Activated CD8-positive, alpha-beta memory T cell treated with anti-CD3 and anti-CD28 coated beads, Interleukin-2, amount 10 ng/mL, durations not matched to agents 7 days and 5 days (primary cell): ENCODE measurements at regions of chr19 and their contacts with region 1.

Region 1: GRCh38 chr19:42028304-42029216 is 34.5 kb upstream of the ATP1A3 start:
- DNase-seq: peak; percentile 46
- ATAC-seq: no peak
- H3K4me3 Mint-ChIP-seq: no peak overlapping the region
- H3K27ac Mint-ChIP-seq: no peak overlapping the region
- H3K4me1 Mint-ChIP-seq: no peaks in the 10 kb centered on the region
- H3K27me3 Mint-ChIP-seq: peaks cover 16% of the 10 kb centered on the region

Region 2: DNA sequence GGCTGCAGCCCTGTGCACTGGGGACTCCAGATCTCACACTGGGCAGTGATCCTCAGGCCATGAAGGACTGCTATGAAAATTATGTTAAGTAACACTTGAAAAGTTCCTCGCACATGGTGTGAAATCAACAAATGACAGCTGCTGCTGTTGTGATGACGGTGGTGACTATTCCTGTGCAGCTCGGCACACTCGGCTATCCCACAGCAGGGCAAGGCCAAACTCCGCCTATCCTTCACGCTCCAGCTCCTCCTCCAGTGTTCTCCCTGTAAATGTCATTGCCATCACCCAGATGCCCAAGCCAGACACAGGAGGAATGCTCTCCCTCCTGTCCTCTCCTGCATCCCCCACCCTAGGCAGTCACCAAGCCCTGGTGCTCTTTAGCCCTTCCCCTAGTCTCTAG is 10.1 kb after region 1 on chr19:
- CTCF ChIA-PET with region 1: interaction called, 12 read pairs
- DNase-seq: no peak
- ATAC-seq: no peak
- H3K4me3 Mint-ChIP-seq: no peak overlapping the region
- H3K27ac Mint-ChIP-seq: no peak overlapping the region
- H3K4me1 Mint-ChIP-seq: peaks cover 5% of the 10 kb centered on the region
- H3K27me3 Mint-ChIP-seq: no peaks in the 10 kb centered on the region

Region 3: GRCh38 chr19:42092350-42092749 is 63.8 kb after region 1 on chr19:
- CTCF ChIA-PET with region 1: no interaction called
- DNase-seq: peak; percentile 76
- ATAC-seq: peak; percentile 69
- H3K4me3 Mint-ChIP-seq: no peak overlapping the region
- H3K27ac Mint-ChIP-seq: no peak overlapping the region
- H3K4me1 Mint-ChIP-seq: peaks cover 35% of the 10 kb centered on the region
- H3K27me3 Mint-ChIP-seq: no peaks in the 10 kb centered on the region